Activated CD4-positive, alpha-beta T cell treated with anti-CD3 and anti-CD28 coated beads, Interleukin-2, amount 10 ng/mL, durations not matched to agents 24 days and 14 days (primary cell): ENCODE measurements at regions of chr7 and their contacts with region 1.

Region 1: GRCh38 chr7:8134089-8134733 is 127.8 kb downstream of the ICA1 start:
- DNase-seq: peak; percentile 81
- H3K4me3 Mint-ChIP-seq: peak overlapping the region; percentile 42
- H3K27ac Mint-ChIP-seq: peak overlapping the region; percentile 65
- H3K4me1 Mint-ChIP-seq: peaks cover 52% of the 10 kb centered on the region
- H3K27me3 Mint-ChIP-seq: no peaks in the 10 kb centered on the region

Region 2: GRCh38 chr7:7566651-7567611 is 567.3 kb before region 1 on chr7 and contains the start of gene MIOS:
- intact Hi-C with region 1: loop called (anchors 5 kb)
- DNase-seq: peak; percentile 96
- H3K4me3 Mint-ChIP-seq: peak within 1 kb of the TSS; percentile 84
- H3K27ac Mint-ChIP-seq: peak within 1 kb of the TSS; percentile 79
- H3K4me1 Mint-ChIP-seq: peaks cover 23% of the 10 kb centered on the region
- H3K27me3 Mint-ChIP-seq: no peaks in the 10 kb centered on the region
- total RNA-seq, gene MIOS: 33.3 and 34.7 TPM in 2 replicates

Region 3: DNA sequence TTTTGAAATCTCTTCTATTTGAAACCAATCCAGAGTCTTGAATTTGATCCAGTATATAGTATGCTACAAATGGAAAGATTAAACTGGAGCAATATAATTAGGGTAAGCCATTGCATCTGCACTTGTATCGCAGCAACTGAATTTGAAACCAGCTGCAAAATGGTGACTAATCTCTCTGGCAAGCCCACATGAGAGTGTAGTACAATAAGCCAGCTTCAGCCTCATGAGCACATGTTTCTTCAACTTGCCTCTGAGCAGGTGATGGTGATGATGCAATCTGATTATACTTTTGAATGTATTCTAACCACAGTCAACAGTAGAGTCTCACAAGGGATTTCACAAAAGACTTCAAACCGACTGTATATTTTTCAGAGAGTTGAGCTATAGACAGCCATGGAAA is 415.0 kb before region 1 on chr7:
- intact Hi-C with region 1: loop called (anchors 2 kb)
- DNase-seq: peak; percentile 84
- H3K4me3 Mint-ChIP-seq: peak overlapping the region; percentile 47
- H3K27ac Mint-ChIP-seq: peak overlapping the region; percentile 73
- H3K4me1 Mint-ChIP-seq: peaks cover 17% of the 10 kb centered on the region
- H3K27me3 Mint-ChIP-seq: no peaks in the 10 kb centered on the region

Region 4: DNA sequence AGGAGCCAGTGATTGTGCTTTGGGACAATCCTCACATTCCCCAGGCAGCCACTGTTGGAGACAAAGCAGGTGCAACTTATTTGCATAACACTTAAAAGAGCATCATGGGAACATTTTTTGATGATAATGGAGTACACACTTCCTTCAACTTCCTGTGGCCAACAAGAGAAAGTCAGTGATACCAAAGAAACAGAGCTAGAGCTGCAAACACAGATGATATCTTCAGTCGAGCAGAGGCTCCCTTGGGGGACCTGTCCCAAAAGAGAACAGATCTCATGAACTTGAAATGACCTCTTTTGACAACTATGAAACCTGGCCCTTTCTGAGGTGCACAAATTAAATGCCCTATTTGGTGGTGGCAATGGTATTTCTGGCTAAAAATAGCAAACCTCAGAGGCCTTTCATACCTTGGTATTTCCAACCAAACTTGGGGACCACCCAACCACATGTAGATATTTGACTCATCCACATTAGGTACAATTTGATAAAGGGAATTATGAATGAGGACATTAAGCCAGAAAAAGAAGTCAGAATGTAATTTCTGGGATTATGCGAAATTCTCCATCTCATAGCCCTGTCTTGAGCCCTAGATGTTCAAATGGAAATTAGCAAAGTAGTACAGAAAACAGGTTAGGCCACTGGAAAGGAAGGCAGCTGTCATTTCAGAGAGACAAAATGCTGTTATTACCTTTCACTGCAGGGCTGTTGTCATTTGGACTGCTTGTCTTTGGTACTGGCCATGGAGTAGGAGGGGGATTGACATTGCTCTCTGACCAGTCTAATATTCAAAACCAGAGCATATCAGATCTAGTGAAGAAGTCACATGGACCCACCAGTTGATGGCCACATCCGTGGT is 18.4 kb before region 1 on chr7:
- intact Hi-C with region 1: loop called (anchors 2 kb)
- DNase-seq: no peak
- H3K4me3 Mint-ChIP-seq: no peak overlapping the region
- H3K27ac Mint-ChIP-seq: peak overlapping the region; percentile 27
- H3K4me1 Mint-ChIP-seq: peaks cover 45% of the 10 kb centered on the region
- H3K27me3 Mint-ChIP-seq: no peaks in the 10 kb centered on the region